Heart right ventricle (tissue), 16 donors: ENCODE measurements at regions of chr1 and their contacts with region 1.

Region 1: GRCh38 chr1:59986516-59987310 is 60.1 kb upstream of the CYP2J2 start:
- DNase-seq: no peak
- ATAC-seq: no peak
- H3K4me3 ChIP-seq: no peak overlapping the region
- H3K27ac ChIP-seq: no peak overlapping the region
- H3K4me1 ChIP-seq: no peaks in the 10 kb centered on the region
- H3K27me3 ChIP-seq: peaks cover 0 to 23% (median 17%) of the 10 kb centered on the region in 7 donors
- CTCF ChIP-seq: no peak

Region 2: GRCh38 chr1:60149251-60149650 is 162.5 kb after region 1 on chr1:
- intact Hi-C with region 1: loop called in 1 of 10 experiments (anchors 10 kb)
- DNase-seq: peak; percentile 53 to 71
- ATAC-seq: peak; percentile 74 to 99 (median 92)
- H3K4me3 ChIP-seq: no peak overlapping the region
- H3K27ac ChIP-seq: no peak overlapping the region
- H3K4me1 ChIP-seq: peaks cover 0 to 8% (median 0%) of the 10 kb centered on the region in 9 donors
- H3K27me3 ChIP-seq: peaks cover 0 to 3% (median 0%) of the 10 kb centered on the region in 7 donors
- CTCF ChIP-seq: no peak

Region 3: GRCh38 chr1:60244906-60245305 is 258.2 kb after region 1 on chr1:
- intact Hi-C with region 1: no loop called
- DNase-seq: no peak
- ATAC-seq: no peak
- H3K4me3 ChIP-seq: no peak overlapping the region
- H3K27ac ChIP-seq: no peak overlapping the region
- H3K4me1 ChIP-seq: no peaks in the 10 kb centered on the region
- H3K27me3 ChIP-seq: no peaks in the 10 kb centered on the region
- CTCF ChIP-seq: no peak